AG04449 (cell line): ENCODE measurements at regions of chr3 and their contacts with region 1.

Region 1: GRCh38 chr3:51498876-51499738 is 708 bp downstream of the DCAF1 start:
- DNase-seq: peak; percentile 49
- H3K4me3 ChIP-seq: peak overlapping the region; percentile 80
- CTCF ChIP-seq: no peak

Region 2: DNA sequence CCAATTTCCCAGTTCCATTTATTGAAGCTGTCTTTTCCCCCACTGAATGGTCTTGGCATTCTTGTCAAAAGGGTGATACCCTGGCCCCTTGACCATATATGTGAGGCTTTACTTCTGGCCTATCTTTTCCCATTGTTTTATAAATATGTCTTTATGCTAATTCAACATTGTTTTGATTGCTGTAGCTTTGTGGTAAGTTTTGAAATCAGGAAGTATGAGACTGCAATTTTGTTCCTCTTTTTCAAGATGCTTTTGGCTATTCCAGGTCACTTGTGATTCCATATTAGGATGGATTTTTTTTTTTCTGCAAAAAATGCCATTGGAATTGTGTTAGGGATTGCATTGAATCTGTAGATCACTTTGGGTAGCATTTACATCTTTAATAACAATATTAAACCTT is 255.2 kb before region 1 on chr3:
- CTCF ChIA-PET with region 1: no interaction called
- POLR2A ChIA-PET with region 1: no interaction called
- DNase-seq: no peak
- H3K4me3 ChIP-seq: no peak overlapping the region
- CTCF ChIP-seq: no peak

Region 3: DNA sequence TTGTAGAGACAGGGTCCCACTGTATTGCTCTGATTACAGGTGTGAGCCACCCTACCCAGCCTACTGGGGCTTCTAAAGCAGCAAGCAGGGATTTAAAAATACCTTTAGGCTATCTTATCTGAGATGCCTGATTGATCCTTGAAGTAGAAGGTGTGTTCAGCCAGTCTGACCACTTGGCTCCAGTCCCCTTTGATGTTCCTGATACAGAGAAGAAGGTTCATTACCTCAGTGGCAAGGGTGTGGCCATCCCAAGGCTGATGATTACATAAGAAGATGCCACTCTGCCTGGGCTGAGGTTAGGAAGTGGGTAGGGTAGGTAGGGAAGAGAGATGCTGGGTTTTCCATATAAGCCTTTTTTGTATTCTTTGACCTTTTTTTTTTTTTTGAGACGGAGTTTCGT is 11.9 kb after region 1 on chr3:
- CTCF ChIA-PET with region 1: interaction called, 44 read pairs
- POLR2A ChIA-PET with region 1: no interaction called
- DNase-seq: no peak
- H3K4me3 ChIP-seq: no peak overlapping the region
- CTCF ChIP-seq: no peak

Region 4: DNA sequence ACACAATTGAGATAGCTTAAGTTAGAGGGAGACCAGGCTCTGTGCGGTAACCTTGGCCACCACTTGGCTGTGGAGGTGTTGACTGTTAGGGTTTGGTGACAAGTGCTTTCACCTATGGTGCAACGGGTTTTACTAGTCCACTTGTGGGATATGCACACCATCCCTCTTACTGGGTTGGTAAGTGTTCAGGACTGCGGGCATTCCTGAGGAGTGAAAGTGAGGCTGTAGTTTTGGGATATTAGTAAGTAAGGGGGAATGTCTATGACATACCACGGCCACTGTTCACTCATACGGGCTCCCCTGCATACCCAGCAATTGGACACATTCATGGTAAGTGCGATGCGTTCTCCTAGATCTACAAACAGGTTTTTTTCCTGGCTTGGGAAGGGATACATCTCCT is 31.4 kb after region 1 on chr3:
- CTCF ChIA-PET with region 1: interaction called, 15 read pairs
- POLR2A ChIA-PET with region 1: no interaction called
- DNase-seq: no peak
- H3K4me3 ChIP-seq: no peak overlapping the region
- CTCF ChIP-seq: no peak

Region 5: DNA sequence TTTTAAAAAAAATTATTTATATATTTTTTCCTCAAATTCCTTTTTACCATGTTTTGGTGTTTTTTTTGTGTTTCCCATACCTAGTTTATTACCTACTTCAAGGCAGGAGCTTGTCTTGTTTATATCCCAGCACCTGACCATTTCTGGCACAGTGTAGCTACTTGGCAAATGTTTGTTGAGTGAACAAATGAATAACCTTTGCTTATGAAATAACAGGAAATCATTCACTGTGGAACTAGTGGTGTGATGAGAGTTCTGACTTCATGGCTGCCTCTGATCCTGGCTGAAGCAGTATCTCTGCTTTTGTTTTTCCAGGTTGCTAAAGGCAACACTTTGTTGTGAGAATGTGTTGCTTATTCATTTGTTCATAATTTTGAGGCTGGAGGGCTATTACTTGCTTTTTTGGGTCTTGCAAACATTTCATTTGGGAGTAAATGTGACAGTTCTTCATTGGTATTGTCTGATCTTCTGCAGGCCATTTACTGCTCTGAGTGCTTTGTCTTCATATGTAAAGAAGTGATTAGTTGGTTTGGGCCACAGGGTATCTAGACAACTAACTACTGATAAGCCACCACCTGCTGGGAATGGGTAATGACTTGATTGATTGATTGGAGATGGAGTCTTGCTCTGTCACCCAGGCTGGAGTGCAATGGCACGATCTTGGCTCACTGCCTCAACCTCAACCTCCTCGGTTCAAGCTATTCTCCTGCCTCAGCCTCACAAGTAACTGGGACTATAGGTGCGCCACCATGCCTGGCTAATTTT is 45.1 kb after region 1 on chr3:
- CTCF ChIA-PET with region 1: interaction called, 38 read pairs
- POLR2A ChIA-PET with region 1: no interaction called
- DNase-seq: no peak
- H3K4me3 ChIP-seq: no peak overlapping the region
- CTCF ChIP-seq: no peak

Region 6: DNA sequence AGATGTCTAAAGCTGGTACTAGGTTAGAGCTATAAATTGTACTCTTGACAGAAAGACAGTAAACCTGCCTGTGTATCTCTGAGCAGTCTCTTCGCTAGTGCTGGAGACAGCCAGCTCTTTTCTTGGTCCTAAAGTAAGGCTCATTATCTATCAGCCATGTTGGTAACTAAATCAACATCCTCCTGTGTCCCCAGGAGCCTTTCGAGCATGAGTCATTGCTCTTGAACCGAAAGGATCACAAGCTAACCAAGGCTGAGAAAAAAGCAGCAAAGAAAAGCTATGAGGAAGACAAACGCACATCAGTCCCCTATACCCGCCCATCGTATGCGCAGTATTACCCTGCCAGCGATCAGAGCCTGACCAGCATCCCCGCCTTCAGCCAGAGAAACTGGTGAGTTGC is 147.0 kb after region 1 on chr3:
- CTCF ChIA-PET with region 1: interaction called, 25 read pairs
- POLR2A ChIA-PET with region 1: no interaction called
- DNase-seq: no peak
- H3K4me3 ChIP-seq: no peak overlapping the region
- CTCF ChIP-seq: no peak

Region 7: GRCh38 chr3:51670823-51671733 is 172.0 kb after region 1 on chr3 and contains the start of gene TEX264:
- CTCF ChIA-PET with region 1: interaction called, 349 read pairs
- POLR2A ChIA-PET with region 1: interaction called, 6 read pairs
- DNase-seq: no peak
- H3K4me3 ChIP-seq: peak within 1 kb of the TSS; percentile 82
- CTCF ChIP-seq: no peak

Region 8: GRCh38 chr3:51799879-51800749 is 301.0 kb after region 1 on chr3:
- CTCF ChIA-PET with region 1: interaction called, 31 read pairs
- POLR2A ChIA-PET with region 1: no interaction called
- DNase-seq: peak; percentile 37
- H3K4me3 ChIP-seq: no peak overlapping the region
- CTCF ChIP-seq: peak; percentile 48